ENCODE measurements at regions of chr4 and their contacts with region 1.

Region 1: GRCh38 chr4:38319456-38320342 is 344.3 kb upstream of the KLF3 start:
- DNase-seq: peak; percentile 82
- ATAC-seq: peak; percentile 80
- H3K4me3 ChIP-seq: peak overlapping the region; percentile 33; the same call in 1 of the 2 replicates
- H3K27ac ChIP-seq: peak overlapping the region; percentile 72
- H3K4me1 ChIP-seq: peaks cover 6% of the 10 kb centered on the region
- H3K27me3 ChIP-seq: no peaks in the 10 kb centered on the region
- CTCF ChIP-seq: peak; percentile 91
- POLR2A ChIP-seq: no peak; the same call in 1 of the 2 replicates
- RAD21 ChIP-seq: peak; percentile 79

Region 2: DNA sequence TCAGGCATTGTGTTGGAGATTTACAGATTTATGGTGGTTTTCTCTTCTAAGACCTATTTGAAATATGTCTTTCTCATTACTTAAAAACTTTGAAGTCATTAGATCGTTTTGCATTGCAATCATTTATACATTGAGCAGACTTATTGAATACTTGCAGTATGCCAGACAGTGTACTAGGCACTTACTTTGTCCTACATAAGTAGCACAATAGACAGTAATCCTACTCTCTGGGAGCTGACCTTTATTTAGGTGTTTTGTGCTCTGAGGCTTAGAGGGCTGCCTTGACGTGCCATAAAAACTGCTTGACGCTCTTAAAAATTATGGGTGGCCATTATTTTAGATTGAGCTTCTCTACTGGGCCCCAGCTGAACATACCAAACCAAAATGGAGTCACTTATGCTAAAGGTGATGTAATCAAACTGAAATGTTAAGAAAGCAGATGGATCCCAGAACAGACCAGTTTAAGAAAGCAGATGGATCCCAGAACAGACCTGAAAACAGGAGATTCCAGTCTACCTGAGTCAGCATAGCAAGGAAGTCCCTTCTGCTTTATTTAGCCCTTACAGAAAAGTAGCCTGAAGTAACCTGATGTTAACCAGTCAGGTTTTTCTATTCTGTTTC is 317.1 kb before region 1 on chr4:
- CTCF ChIA-PET with region 1: no interaction called
- POLR2A ChIA-PET with region 1: no interaction called
- dilution Hi-C with region 1: no loop called
- in situ Hi-C with region 1: no loop called
- intact Hi-C with region 1: no loop called
- DNase-seq: peak; percentile 47
- ATAC-seq: no peak
- H3K4me3 ChIP-seq: no peak overlapping the region
- H3K27ac ChIP-seq: no peak overlapping the region
- H3K4me1 ChIP-seq: peaks cover 12% of the 10 kb centered on the region
- H3K27me3 ChIP-seq: no peaks in the 10 kb centered on the region
- CTCF ChIP-seq: no peak
- POLR2A ChIP-seq: no peak
- RAD21 ChIP-seq: no peak

Region 3: GRCh38 chr4:38062088-38062893 is 257.4 kb before region 1 on chr4:
- CTCF ChIA-PET with region 1: no interaction called
- POLR2A ChIA-PET with region 1: no interaction called
- dilution Hi-C with region 1: no loop called
- in situ Hi-C with region 1: loop called (anchors 10 kb)
- intact Hi-C with region 1: no loop called
- DNase-seq: peak; percentile 79
- ATAC-seq: peak; percentile 87
- H3K4me3 ChIP-seq: no peak overlapping the region
- H3K27ac ChIP-seq: no peak overlapping the region
- H3K4me1 ChIP-seq: peaks cover 2% of the 10 kb centered on the region; the same call in 1 of the 2 replicates
- H3K27me3 ChIP-seq: no peaks in the 10 kb centered on the region
- CTCF ChIP-seq: peak; percentile 87
- POLR2A ChIP-seq: no peak
- RAD21 ChIP-seq: peak; percentile 95

Region 4: GRCh38 chr4:38179690-38180377 is 139.9 kb before region 1 on chr4:
- CTCF ChIA-PET with region 1: interaction called, 7 read pairs
- POLR2A ChIA-PET with region 1: no interaction called
- dilution Hi-C with region 1: no loop called
- in situ Hi-C with region 1: no loop called
- intact Hi-C with region 1: loop called (anchors 1 kb)
- DNase-seq: peak; percentile 77
- ATAC-seq: peak; percentile 90
- H3K4me3 ChIP-seq: no peak overlapping the region
- H3K27ac ChIP-seq: no peak overlapping the region
- H3K4me1 ChIP-seq: peaks cover 12% of the 10 kb centered on the region
- H3K27me3 ChIP-seq: no peaks in the 10 kb centered on the region
- CTCF ChIP-seq: peak; percentile 85
- POLR2A ChIP-seq: no peak
- RAD21 ChIP-seq: peak; percentile 92

Region 5: DNA sequence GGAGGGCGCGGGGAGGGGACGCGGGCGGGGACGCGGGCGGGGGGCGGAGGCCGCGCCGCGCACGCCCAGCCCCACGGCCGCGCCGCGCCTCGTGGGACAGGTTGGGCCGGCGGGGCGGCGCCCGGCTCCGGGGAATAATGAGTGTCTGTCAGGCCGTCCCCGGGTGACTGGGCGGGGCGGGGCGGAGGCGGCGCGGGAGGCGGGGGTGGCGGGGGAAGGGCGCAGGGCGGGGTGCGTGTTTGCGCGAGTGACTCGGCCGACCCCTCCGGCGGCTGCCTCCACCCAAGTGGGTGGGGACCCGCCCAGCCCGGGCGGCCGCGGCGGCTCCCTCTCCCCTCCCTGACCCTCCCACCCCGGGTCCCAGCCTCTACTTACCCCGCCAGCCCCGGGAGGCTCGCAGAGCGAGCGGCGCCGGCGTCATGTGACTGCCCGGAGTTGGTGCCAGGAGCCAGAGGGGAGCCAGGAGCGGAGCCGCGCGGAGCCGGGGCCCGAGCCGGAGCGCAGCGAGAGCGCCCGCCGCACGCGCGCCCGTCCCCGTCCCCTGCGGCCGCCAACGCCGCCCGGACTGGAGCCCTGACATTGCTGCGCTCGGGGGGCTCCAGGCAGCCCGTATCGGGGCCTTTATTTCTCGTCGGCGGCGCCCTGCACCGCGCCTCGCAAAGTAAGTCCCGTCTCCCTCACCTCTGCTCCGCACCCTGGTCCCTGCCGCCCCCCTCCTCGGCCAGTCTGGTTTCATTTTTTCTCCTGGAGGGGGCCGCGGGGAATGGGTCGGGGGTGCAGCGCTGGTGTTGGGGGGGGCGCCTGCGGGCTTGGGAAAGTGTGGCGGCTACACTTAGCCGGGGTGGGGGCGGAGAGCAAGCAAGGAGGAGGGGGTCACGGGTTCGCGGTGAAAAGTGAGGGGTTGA is 344.4 kb after region 1 on chr4 and contains the start of gene KLF3:
- CTCF ChIA-PET with region 1: interaction called, 5 read pairs
- POLR2A ChIA-PET with region 1: no interaction called
- dilution Hi-C with region 1: no loop called
- in situ Hi-C with region 1: no loop called
- intact Hi-C with region 1: loop called (anchors 2 kb)
- DNase-seq: peak; percentile 82
- ATAC-seq: peak; percentile 80
- H3K4me3 ChIP-seq: peak within 1 kb of the TSS; percentile 77
- H3K27ac ChIP-seq: peak within 1 kb of the TSS; percentile 97
- H3K4me1 ChIP-seq: peaks cover 5% of the 10 kb centered on the region
- H3K27me3 ChIP-seq: no peaks in the 10 kb centered on the region; the same call in 1 of the 2 replicates
- CTCF ChIP-seq: no peak
- POLR2A ChIP-seq: peak; percentile 88
- RAD21 ChIP-seq: no peak
- total RNA-seq, gene KLF3: 8.2 and 9.4 TPM in 2 replicates

Region 6: DNA sequence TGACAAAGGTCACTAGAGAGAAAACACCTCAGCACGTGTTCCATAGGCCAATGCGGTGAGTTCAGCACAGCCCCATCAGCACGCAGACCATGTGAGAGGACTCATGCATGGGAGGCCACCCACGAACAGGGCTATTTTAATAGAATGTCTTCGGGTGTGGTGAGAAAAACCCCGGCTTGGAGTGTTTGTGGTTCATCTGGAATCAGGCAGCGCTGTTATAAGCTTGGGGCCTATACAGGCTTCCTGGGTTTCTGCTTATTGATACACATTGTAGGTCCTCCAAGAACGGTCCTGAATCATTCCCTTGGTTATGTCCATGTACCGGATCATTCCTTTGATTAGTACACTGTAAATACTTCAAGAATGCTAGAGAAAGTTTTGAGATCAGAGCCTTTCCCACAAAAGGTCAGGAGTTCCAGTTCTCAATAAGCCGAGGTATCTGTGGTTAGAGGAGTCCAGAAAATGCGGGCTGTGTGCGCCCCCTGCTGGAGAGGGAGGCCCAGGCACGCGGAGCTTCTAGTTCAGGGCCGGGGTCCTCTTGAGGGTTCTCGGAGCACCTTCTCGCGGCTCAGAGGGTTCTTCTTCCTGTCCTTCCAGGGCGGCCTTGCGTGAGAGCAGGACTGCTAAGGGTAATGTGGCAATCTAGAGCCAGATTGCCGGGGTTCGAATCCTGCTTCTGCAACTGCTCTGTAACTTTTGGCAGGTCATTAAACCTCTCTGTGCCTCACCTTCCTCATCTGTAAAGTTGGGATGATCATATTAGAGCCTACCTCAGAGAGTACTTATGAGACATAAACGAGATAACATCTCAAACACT is 411.3 kb after region 1 on chr4:
- CTCF ChIA-PET with region 1: interaction called, 4 read pairs
- POLR2A ChIA-PET with region 1: no interaction called
- dilution Hi-C with region 1: no loop called
- in situ Hi-C with region 1: no loop called
- intact Hi-C with region 1: loop called (anchors 1 kb)
- DNase-seq: peak; percentile 94
- ATAC-seq: peak; percentile 97
- H3K4me3 ChIP-seq: no peak overlapping the region
- H3K27ac ChIP-seq: no peak overlapping the region
- H3K4me1 ChIP-seq: peaks cover 3% of the 10 kb centered on the region; the same call in 1 of the 2 replicates
- H3K27me3 ChIP-seq: peaks cover 7% of the 10 kb centered on the region
- CTCF ChIP-seq: peak; percentile 87
- POLR2A ChIP-seq: no peak; the same call in 1 of the 2 replicates
- RAD21 ChIP-seq: peak; percentile 91